Brain microvascular endothelial cell (primary cell): ENCODE measurements at regions of chr13 and their contacts with region 1.

Region 1: DNA sequence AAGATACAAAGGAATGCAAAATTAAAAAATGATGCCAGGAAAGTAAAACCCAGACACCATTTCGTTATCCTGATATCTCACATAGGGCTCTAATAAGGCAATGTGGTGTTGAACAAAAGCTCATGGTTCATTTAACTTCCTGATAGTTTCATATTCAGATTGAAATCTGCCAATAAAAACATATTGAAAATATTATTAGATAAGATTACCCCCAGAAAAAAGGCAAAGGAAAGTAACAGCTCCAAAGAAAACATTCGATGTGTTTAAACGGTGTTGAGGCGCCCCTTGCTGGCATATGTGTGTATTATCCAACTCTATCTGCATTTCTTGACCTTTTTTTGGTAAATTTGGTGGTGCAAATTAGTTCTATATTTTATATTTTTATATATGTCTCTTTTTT is 75.9 kb downstream of the ESD start:
- DNase-seq: peak; percentile 56
- H3K4me3 ChIP-seq: no peak overlapping the region
- H3K27ac ChIP-seq: no peak overlapping the region
- H3K27me3 ChIP-seq: no peaks in the 10 kb centered on the region
- CTCF ChIP-seq: peak; percentile 66

Region 2: GRCh38 chr13:46492946-46493345 is 228.1 kb before region 1 on chr13:
- in situ Hi-C with region 1: loop called (anchors 25 kb)
- DNase-seq: peak; percentile 31
- H3K4me3 ChIP-seq: no peak overlapping the region
- H3K27ac ChIP-seq: no peak overlapping the region
- H3K27me3 ChIP-seq: no peaks in the 10 kb centered on the region
- CTCF ChIP-seq: peak; percentile 64

Region 3: DNA sequence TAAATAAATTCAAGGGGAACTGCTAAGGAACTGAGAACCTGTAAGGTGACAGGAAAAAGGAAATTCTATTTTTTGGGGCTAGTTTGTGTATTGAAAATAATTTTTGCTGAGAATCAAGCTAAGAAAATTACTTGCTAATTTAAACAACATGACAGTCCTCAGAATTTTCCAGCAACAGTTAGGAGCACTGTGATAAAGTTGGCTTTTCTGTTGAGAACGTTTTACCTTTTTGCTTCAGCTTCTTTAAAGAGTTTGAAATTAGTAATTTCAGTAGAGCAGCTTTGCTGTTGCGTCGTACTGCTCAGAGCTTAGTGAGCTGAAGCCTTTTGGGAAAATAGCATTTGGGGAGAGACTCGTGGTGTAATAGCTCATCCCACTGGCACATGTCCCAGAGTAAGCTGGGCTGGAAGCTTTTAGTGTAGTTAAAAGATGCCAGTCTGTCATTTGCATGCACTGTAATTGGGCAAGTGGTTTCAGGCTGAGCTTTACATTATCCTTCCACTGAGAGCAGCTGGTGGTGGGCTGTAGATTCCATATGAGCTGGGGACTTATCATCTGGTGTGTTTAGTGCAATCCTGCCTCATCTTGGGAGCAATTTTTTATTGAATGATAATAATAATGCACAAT is 98.3 kb before region 1 on chr13:
- in situ Hi-C with region 1: no loop called
- DNase-seq: no peak
- H3K4me3 ChIP-seq: no peak overlapping the region
- H3K27ac ChIP-seq: no peak overlapping the region
- H3K27me3 ChIP-seq: no peaks in the 10 kb centered on the region
- CTCF ChIP-seq: no peak